Right ventricle myocardium inferior (tissue), 1 donor: ENCODE measurements at regions of chr6 and their contacts with region 1.

Region 1: DNA sequence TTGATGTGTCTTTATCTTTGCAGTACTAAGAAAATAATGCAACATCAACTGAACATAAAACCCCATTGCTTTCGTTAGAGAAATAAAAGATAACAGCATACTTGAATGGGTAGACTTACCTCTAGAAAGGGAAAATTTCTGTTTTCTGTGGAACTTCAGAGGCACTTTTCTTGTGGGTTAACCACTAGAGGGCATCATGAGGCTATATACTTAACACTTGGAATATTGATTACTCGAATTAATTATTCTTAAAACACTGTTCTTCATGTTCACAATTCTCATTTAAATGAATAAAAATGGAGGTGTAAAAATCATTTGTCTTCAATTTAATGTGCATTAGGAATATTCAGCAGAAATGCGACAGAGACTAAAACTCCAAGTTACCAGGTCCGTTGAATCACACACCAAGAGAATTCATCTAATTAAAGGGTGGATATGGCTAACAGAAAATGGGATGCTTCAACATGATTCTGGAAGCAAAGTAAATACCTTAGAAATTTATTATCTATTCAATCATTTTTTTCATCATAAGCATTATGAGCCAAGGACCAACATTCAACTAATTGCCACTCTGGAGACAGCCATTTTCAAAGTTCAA is 330.8 kb upstream of the PREP start:
- DNase-seq: no peak
- ATAC-seq: no peak

Region 2: DNA sequence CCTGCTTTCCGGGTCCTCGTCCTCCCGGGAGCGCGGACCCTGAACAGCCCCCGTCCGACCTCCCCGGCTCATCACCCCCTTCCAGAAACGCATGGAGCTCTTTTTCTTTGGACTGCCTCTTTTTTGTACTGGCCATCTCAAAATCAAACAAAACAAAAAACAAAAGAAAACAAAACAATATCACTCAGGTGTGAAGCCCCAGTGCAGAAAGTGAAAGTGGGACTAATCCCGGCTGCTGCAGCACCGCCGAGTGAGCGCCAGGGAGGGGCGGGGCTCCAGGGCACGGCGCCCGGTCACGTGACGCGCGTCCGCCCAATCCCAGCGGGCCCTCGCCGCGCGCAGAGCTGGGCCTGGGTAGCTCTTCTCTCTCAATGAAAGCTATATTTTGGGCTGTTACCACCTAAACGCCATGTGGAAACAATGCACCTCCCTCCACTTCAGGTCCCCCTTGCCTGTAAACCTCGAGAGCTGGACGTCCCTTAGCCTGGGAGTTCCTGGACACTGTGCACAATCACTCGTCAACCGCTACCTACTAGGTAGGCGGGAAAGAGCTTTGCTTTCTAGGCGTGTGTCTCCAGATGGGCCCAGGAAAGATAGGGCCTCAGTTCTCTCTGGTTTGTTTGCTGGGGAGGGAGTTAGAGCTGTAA is 258.8 kb after region 1 on chr6:
- intact Hi-C with region 1: loop called (anchors 5 kb)
- DNase-seq: peak; percentile 92
- ATAC-seq: peak; percentile 92

Region 3: DNA sequence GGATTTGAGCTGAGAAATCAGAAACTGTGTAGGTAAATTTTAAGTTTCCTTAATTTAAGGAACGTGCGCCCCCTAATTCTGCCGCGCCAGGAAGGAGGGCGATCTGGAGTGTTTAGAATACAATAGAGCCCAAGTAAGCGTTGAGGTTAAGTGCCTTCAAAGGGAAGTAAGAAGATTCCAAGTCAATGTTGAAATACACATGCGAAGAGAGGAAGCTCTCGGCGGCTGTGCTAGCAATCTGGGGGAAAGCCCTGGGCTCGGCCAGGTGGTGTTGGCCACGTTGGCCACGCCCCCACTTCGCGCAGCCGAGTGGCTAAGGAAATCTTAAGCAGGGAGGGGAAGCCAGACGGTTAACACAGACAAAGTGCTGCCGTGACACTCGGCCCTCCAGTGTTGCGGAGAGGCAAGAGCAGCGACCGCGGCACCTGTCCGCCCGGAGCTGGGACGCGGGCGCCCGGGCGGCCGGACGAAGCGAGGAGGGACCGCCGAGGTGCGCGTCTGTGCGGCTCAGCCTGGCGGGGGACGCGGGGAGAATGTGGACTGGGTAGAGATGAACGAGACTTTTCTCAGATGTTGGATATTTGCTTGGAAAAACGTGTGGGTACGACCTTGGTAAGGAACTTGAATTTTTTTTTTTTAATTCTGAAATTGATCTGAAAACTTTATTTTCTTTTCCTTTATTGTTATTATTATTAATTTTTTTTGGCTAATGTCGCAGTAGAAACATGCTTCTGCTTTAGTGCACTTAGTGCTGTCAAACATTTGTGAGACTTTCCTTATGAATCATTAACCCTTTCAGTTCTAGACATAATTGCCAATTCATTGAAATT is 352.5 kb after region 1 on chr6 and contains the start of gene PRDM1:
- intact Hi-C with region 1: loop called (anchors 10 kb)
- DNase-seq: peak; percentile 94
- ATAC-seq: peak; percentile 69
- total RNA-seq, gene PRDM1: 0.87 TPM

Region 4: DNA sequence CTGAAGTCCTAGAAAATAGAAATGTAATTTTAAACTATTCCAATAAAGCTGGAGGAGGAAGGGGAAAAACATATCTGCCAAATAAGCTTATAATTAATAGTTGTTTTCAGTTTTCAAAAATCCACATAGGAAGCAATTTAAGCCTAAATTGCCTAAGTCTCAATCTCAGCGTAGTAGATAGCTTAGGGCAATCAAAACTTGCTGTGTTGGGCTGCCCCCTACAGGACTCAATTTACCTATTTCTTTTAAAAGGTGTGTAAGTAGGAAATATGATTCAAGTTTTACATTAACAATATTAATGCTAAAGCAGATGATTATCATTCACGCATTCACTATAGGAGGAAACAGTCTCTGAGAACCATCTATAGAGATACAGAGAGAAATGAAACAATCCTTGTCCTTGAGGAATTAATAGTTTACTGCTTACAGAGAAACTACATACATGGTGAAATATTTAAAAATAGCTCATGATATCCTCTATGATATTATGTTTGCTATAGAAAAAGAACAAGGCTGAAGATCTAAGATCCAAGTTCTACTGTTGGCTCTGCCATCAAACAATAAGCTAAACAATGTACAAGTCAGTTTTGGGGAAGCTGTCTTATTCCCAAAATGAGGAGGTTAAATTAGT is 489.8 kb after region 1 on chr6:
- intact Hi-C with region 1: loop called (anchors 5 kb)
- DNase-seq: no peak
- ATAC-seq: no peak

Region 5: GRCh38 chr6:106300944-106301343 is 567.3 kb after region 1 on chr6:
- intact Hi-C with region 1: loop called (anchors 10 kb)
- DNase-seq: no peak
- ATAC-seq: no peak